ENCODE measurements at regions of chr5 and their contacts with region 1.

Region 1: DNA sequence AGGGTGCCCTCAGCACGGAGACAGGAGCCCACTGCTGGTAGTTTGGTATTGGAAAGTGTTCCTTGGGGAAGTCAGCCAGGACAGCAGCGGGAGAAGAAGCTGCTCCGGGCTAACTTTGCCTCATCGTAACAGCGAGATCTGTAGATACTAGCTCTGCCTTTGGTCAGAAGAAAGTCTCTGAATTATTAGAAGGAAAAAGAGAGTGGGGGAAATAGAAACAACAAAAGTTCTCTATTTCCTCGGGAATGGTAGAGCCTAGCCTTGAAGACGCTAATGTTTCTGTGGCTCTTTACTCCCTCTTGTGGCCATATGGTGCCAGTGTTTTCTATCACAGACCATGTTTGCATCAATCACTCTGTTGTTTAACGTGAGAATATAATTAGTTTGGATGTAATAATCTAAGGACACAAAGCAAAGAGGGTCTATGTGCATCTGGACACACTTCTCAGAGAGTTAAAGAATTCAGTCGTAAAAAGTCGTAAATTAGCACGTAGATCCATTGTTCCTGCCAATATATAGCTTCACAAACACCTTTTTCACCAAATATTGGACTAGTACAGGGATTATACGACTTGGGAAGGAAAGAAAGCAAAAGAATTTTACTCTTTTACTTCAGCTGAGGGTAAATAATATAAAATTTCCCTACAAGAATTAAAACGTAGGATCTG is 40.2 kb upstream of the HSD17B4 start:
- ATAC-seq: peak; percentile 78 to 97 (median 95)
- H3K4me3 ChIP-seq: peak overlapping the region; percentile 27 to 45 (median 37)
- H3K27ac ChIP-seq: no peak overlapping the region
- H3K4me1 ChIP-seq: no peaks in the 10 kb centered on the region

Region 2: GRCh38 chr5:118987988-118988865 is 423.8 kb before region 1 on chr5 and contains the start of gene DTWD2:
- in situ Hi-C with region 1: loop called in 5 of 9 experiments (anchors 25 kb)
- ATAC-seq: peak; percentile 91 to 97 (median 94)
- H3K4me3 ChIP-seq: peak within 1 kb of the TSS; percentile 67 to 99 (median 92)
- H3K27ac ChIP-seq: peak within 1 kb of the TSS; percentile 97
- H3K4me1 ChIP-seq: peaks cover 4 to 5% of the 10 kb centered on the region in 2 donors
- total RNA-seq, gene DTWD2: 2.7 to 10.5 (median 4.1) TPM

Region 3: GRCh38 chr5:119022017-119022745 is 389.9 kb before region 1 on chr5:
- in situ Hi-C with region 1: loop called in 3 of 9 experiments (anchors 25 kb)
- ATAC-seq: peak in 3 of 8 experiments; percentile 66 to 77 (median 73)
- H3K4me3 ChIP-seq: no peak overlapping the region
- H3K27ac ChIP-seq: no peak overlapping the region
- H3K4me1 ChIP-seq: no peaks in the 10 kb centered on the region

Region 4: DNA sequence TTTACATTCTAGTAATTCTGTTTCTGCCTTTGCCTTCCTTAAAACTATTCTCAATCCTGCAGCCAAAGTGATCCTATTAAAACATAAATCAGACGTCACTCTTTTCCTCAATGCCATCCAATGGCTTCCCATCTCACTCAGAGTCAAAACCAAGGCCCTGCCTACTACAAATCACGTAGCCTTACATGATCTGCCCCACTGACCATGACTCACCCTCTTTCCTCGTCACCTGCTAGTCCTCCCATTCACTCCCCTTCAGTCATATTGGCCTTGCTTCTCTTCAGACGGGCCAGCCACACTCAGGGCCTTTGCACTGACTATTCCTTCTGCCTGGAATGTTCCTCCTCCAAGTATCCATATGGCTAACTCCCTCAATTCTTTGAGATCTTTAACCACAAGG is 380.2 kb before region 1 on chr5:
- in situ Hi-C with region 1: loop called in 1 of 9 experiments (anchors 25 kb)
- ATAC-seq: no peak
- H3K4me3 ChIP-seq: no peak overlapping the region
- H3K27ac ChIP-seq: no peak overlapping the region
- H3K4me1 ChIP-seq: no peaks in the 10 kb centered on the region

Measured in motor neuron (in vitro differentiated cells).